ENCODE measurements at regions of chr9 and their contacts with region 1.

Region 1: GRCh38 chr9:126398403-126399058 is 71.9 kb downstream of the MVB12B start:
- DNase-seq: peak; percentile 75
- ATAC-seq: peak; percentile 33
- H3K4me3 Mint-ChIP-seq: no peak overlapping the region
- H3K27ac Mint-ChIP-seq: peak overlapping the region; percentile 7
- H3K4me1 Mint-ChIP-seq: peaks cover 28% of the 10 kb centered on the region
- H3K27me3 Mint-ChIP-seq: peaks cover 5% of the 10 kb centered on the region
- CTCF ChIP-seq: peak; percentile 66

Region 2: DNA sequence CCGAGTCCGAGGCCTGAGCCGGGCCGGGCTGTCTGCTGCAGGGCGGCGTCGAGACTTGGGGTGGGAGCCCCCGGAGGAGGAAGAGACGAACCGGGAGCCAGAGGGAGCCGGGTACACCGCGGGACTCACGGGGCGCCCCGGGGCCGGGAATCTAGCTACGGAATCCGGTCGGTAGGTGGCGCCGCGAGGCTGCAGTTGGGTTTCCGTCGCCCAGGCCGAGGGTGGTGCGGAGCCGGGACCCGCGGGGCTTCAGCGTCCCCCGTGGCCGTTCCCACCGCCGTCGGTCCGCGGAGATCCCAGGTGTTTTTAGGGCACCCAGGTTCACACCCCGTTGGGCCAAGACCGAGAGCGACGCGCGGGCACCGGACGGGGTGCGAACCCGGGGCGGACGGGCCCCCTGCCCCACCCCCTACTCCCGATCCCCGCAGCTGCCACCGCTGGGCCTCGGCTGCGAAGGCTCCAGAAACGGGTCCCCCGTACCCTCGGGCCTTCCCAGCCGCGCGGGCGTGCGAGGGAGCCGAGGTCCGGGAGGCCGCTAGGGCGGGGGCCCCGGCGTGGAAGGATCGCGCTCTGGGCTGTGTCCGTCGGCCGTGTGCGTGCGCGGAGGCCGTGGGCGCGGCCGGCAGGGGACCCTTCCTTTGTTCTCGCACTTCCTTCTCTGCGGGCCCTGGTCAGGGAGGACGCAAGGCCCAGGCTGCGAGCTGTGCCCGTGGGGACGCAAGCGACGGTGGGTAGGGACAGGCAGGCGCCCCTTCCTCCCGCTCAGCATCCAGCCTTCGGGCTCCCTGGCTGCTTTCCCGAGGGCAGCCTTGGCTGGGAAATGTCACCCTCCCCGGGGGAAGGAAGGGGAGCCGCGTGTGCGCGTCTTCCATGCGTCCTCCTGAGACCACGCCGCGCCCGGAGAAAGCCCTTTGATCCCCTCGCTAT is 990.3 kb before region 1 on chr9:
- CTCF ChIA-PET with region 1: interaction called, 24 read pairs
- POLR2A ChIA-PET with region 1: interaction called, 3 read pairs
- intact Hi-C with region 1: loop called (anchors 1 kb)
- DNase-seq: peak; percentile 79
- ATAC-seq: peak; percentile 86
- H3K4me3 Mint-ChIP-seq: peak overlapping the region; percentile 75
- H3K27ac Mint-ChIP-seq: no peak overlapping the region
- H3K4me1 Mint-ChIP-seq: peaks cover 16% of the 10 kb centered on the region
- H3K27me3 Mint-ChIP-seq: peaks cover 23% of the 10 kb centered on the region
- CTCF ChIP-seq: peak; percentile 68

Region 3: DNA sequence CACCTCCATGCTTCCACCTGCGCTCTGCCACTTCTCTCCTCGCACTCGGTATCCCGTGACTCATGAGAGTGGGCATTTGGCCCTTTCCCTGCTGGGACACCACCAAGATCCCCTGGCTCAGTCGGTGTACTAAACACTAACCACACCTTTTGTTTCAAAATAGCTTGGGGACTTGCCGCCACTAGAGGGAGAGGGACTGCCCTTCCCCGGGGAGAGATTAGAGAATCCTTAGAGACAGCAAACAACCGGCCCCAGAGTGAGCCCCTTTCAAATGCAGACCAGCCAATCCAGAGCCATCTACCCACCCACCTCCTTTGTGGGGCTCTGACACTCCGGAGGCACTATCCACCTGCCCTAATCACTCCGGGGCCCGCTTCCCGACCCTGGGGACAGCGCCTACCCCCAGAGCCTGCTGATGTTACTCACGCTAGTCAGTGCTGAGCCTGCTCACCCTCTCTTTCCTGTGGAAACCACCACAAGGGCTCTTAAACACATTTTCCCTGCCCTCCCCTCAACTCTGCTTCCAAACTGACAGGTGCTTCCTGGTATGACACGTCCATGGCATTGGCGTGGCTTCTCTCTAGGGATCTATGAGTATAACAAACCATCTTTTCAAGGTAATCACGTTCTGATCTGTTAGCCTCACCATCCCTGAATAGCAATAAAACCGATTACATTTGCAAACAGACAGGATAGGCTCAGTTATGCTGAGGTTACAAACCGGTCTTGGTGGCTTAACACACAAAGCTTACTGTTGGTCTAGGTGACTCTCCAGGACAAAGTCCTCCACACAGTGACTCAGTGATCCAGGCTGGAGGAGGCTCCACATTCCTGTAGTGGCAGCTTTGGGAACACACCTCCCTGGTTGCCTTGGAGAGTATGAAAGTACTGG is 252.0 kb before region 1 on chr9:
- CTCF ChIA-PET with region 1: interaction called, 4 read pairs
- POLR2A ChIA-PET with region 1: no interaction called
- intact Hi-C with region 1: loop called (anchors 10 kb)
- DNase-seq: peak; percentile 40
- ATAC-seq: peak; percentile 76
- H3K4me3 Mint-ChIP-seq: peak overlapping the region; percentile 70
- H3K27ac Mint-ChIP-seq: peak overlapping the region; percentile 62
- H3K4me1 Mint-ChIP-seq: peaks cover 23% of the 10 kb centered on the region
- H3K27me3 Mint-ChIP-seq: peaks cover 31% of the 10 kb centered on the region
- CTCF ChIP-seq: no peak

Region 4: GRCh38 chr9:126283799-126284465 is 114.6 kb before region 1 on chr9:
- CTCF ChIA-PET with region 1: no interaction called
- POLR2A ChIA-PET with region 1: no interaction called
- intact Hi-C with region 1: no loop called
- DNase-seq: no peak
- ATAC-seq: no peak
- H3K4me3 Mint-ChIP-seq: no peak overlapping the region
- H3K27ac Mint-ChIP-seq: no peak overlapping the region
- H3K4me1 Mint-ChIP-seq: no peaks in the 10 kb centered on the region
- H3K27me3 Mint-ChIP-seq: peaks cover 10% of the 10 kb centered on the region
- CTCF ChIP-seq: no peak

Region 5: DNA sequence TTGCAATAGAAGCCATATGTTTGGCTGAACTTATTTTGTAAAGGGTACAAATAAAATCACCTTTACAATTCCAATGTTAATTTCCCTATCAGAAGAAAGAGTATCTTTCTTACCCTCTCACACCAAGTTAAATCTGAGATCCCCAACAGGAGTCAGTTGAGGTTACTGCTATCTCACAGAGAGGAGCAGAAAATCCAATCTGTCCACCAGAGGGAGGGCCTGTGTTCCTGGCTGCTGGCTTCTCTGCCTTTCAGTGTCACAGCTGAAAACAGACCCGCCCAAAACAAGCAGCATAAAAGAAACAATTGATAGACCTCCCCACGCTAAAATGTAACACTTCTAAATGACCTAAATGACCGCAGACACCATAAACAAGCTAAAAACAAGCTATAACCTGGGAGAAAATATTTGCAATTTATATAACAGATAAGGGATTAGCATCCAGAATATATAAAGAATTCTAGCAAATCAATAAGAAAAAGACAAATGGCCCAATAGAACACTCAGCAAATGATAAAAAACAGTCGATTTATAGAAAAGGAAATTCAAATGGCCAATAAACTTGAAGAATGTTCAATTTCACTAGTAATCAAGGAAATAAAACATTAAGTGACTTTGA is 96.4 kb before region 1 on chr9:
- CTCF ChIA-PET with region 1: interaction called, 48 read pairs
- POLR2A ChIA-PET with region 1: no interaction called
- intact Hi-C with region 1: loop called (anchors 1 kb)
- DNase-seq: no peak
- ATAC-seq: peak; percentile 69
- H3K4me3 Mint-ChIP-seq: no peak overlapping the region
- H3K27ac Mint-ChIP-seq: no peak overlapping the region
- H3K4me1 Mint-ChIP-seq: no peaks in the 10 kb centered on the region
- H3K27me3 Mint-ChIP-seq: peaks cover 2% of the 10 kb centered on the region
- CTCF ChIP-seq: no peak

Region 6: GRCh38 chr9:126317513-126317912 is 81.0 kb before region 1 on chr9:
- CTCF ChIA-PET with region 1: interaction called, 29 read pairs
- POLR2A ChIA-PET with region 1: no interaction called
- intact Hi-C with region 1: loop called (anchors 1 kb)
- DNase-seq: no peak
- ATAC-seq: peak; percentile 52
- H3K4me3 Mint-ChIP-seq: no peak overlapping the region
- H3K27ac Mint-ChIP-seq: no peak overlapping the region
- H3K4me1 Mint-ChIP-seq: no peaks in the 10 kb centered on the region
- H3K27me3 Mint-ChIP-seq: peaks cover 16% of the 10 kb centered on the region
- CTCF ChIP-seq: no peak

Region 7: GRCh38 chr9:126411225-126411947 is 12.9 kb after region 1 on chr9:
- CTCF ChIA-PET with region 1: interaction called, 12 read pairs
- POLR2A ChIA-PET with region 1: no interaction called
- intact Hi-C with region 1: no loop called
- DNase-seq: no peak
- ATAC-seq: peak; percentile 88
- H3K4me3 Mint-ChIP-seq: peak overlapping the region; percentile 81
- H3K27ac Mint-ChIP-seq: peak overlapping the region; percentile 85
- H3K4me1 Mint-ChIP-seq: peaks cover 35% of the 10 kb centered on the region
- H3K27me3 Mint-ChIP-seq: no peaks in the 10 kb centered on the region
- CTCF ChIP-seq: no peak

Region 8: DNA sequence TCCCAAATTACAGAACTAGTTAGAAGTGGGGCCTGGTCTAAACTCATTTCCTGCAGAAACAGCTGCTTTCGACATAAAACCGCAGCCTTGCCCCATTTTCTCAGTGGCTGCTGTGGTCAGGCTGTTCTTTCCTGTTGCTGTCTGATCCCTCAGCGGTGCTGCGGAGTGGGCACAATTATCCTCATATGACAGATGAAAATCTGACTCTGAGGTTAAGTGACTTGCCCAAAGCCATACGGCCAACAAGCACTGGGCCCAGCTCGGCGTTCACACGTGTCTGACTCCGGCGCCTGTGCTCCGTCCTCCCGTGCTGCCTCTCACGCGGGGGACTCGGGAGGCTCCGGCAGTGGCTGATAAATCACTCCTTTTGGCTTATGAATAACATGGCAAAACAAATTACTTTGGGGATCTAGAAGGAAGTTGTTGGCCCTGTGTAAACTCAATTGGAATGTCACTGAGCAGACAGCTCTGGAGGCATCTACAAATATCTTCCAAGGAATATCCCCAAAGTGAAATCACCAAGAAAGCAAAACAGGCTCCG is 72.6 kb after region 1 on chr9:
- CTCF ChIA-PET with region 1: interaction called, 8 read pairs
- POLR2A ChIA-PET with region 1: interaction called, 12 read pairs
- intact Hi-C with region 1: loop called (anchors 2 kb)
- DNase-seq: peak; percentile 61
- ATAC-seq: peak; percentile 77
- H3K4me3 Mint-ChIP-seq: peak overlapping the region; percentile 75
- H3K27ac Mint-ChIP-seq: peak overlapping the region; percentile 92
- H3K4me1 Mint-ChIP-seq: peaks cover 57% of the 10 kb centered on the region
- H3K27me3 Mint-ChIP-seq: no peaks in the 10 kb centered on the region
- CTCF ChIP-seq: no peak

Measured in activated B cell treated with CpG ODN at 0.5 μM for 24 hours (primary cell).